Ovary (tissue), 10 donors: ENCODE measurements at regions of chr7 and their contacts with region 1.

Region 1: GRCh38 chr7:47088329-47089067 is 493.4 kb downstream of the TNS3 start:
- DNase-seq: peak; percentile 47 to 71 (median 65)
- H3K4me3 ChIP-seq: no peak overlapping the region
- H3K27ac ChIP-seq: no peak overlapping the region
- H3K4me1 ChIP-seq: peaks cover 2% of the 10 kb centered on the region
- H3K27me3 ChIP-seq: no peaks in the 10 kb centered on the region
- CTCF ChIP-seq: peak; percentile 71 to 91 (median 77)
- EP300 ChIP-seq: no peak
- POLR2A ChIP-seq: no peak

Region 2: DNA sequence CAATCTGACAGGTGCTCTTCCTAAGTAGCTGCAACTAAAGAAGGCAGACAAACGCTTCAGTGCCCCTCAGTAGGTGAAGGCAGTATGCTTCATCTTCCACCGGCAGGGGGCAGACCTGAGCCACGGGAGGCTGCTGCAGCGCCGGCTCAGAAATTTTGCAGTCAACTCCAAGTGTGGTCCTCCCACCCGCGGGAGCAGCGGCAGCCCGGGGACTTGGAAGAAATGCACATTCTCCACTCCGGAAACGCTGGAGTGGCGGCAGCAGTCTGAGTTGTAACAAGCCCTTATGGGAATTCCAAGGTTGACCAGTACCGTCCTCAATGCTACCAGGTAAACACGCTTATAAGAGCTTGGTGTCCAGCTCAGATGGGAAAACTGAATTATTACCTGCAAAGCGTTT is 1170.8 kb before region 1 on chr7:
- intact Hi-C with region 1: loop called (anchors 2 to 5 kb)
- DNase-seq: peak; percentile 77 to 88 (median 87)
- H3K4me3 ChIP-seq: peak overlapping the region; percentile 78
- H3K27ac ChIP-seq: no peak overlapping the region
- H3K4me1 ChIP-seq: peaks cover 4% of the 10 kb centered on the region
- H3K27me3 ChIP-seq: no peaks in the 10 kb centered on the region
- CTCF ChIP-seq: peak; percentile 80 to 87 (median 85)
- EP300 ChIP-seq: no peak
- POLR2A ChIP-seq: no peak

Region 3: GRCh38 chr7:45923290-45923689 is 1165.2 kb before region 1 on chr7:
- intact Hi-C with region 1: loop called (anchors 2 to 5 kb)
- DNase-seq: peak; percentile 66 to 83 (median 81)
- H3K4me3 ChIP-seq: no peak overlapping the region
- H3K27ac ChIP-seq: no peak overlapping the region
- H3K4me1 ChIP-seq: peaks cover 4% of the 10 kb centered on the region
- H3K27me3 ChIP-seq: no peaks in the 10 kb centered on the region
- CTCF ChIP-seq: peak; percentile 53 to 80 (median 76)
- EP300 ChIP-seq: no peak
- POLR2A ChIP-seq: no peak

Region 4: GRCh38 chr7:46352004-46352954 is 736.2 kb before region 1 on chr7:
- intact Hi-C with region 1: loop called in 1 of 4 experiments (anchors 10 kb)
- DNase-seq: peak in 2 of 5 donors; percentile 21 to 33
- H3K4me3 ChIP-seq: no peak overlapping the region
- H3K27ac ChIP-seq: no peak overlapping the region
- H3K4me1 ChIP-seq: peaks cover 1% of the 10 kb centered on the region
- H3K27me3 ChIP-seq: no peaks in the 10 kb centered on the region
- CTCF ChIP-seq: peak in 1 of 3 donors; percentile 33
- EP300 ChIP-seq: no peak
- POLR2A ChIP-seq: no peak

Region 5: DNA sequence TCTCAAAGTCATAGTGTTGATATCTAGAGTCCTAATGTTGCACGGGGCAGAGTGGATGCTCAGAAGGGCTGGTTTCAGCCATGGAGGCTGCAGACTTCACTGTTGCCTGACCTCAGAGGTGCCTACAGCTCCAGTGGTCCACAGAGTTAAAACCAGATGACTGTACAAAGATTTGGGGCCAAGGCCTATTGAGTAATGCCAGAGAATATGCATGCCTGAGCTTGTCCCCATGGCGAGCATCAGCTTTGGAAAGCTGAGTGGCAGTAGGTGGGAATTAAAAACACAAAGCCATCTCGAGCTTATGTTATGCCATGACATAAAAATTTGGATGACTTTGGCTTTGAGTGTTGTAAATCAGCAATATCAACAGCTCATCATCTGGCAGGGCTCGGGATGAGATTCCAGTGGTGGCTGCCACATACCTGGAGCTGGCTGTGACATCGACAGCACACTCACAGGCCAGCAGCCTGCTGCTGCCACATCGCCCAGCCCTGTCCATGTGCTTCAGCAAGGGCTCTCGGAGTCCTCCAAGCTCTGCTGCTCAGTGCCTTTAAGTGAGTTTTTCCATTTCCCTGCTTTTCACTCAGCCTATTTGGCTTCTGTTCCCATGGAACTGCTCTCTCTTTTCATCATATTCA is 113.8 kb after region 1 on chr7:
- intact Hi-C with region 1: no loop called
- DNase-seq: no peak
- H3K4me3 ChIP-seq: no peak overlapping the region
- H3K27ac ChIP-seq: no peak overlapping the region
- H3K4me1 ChIP-seq: no peaks in the 10 kb centered on the region
- H3K27me3 ChIP-seq: no peaks in the 10 kb centered on the region
- CTCF ChIP-seq: no peak
- EP300 ChIP-seq: no peak
- POLR2A ChIP-seq: no peak

Region 6: DNA sequence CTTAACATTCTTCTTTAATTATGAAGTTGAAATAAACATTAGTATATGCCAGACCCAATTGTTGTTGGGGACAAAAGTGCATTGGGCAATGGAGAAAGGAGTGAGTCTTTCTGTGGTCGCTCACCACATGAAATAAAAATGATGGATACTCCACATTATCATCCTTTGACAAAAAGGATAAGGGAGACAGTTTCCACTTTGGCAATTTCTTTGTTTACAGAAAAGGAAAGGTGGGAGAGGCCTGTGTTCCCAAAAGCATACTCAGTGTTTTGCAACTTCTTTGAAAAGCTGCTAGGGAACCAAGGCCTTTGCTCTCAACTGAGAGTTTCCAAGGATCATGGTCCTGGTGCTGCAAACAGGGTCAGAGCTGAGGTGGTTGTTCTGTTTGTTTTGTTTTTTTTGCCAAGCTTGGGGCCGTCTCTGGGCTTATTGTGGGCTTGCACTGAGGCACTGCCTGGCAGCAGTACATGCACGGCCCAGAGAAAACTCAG is 151.5 kb after region 1 on chr7:
- intact Hi-C with region 1: loop called in 1 of 4 experiments (anchors 10 kb)
- DNase-seq: peak in 3 of 5 donors; percentile 41 to 52 (median 48)
- H3K4me3 ChIP-seq: no peak overlapping the region
- H3K27ac ChIP-seq: peak overlapping the region in 1 of 2 donors; percentile 70
- H3K4me1 ChIP-seq: peaks cover 23% of the 10 kb centered on the region
- H3K27me3 ChIP-seq: no peaks in the 10 kb centered on the region
- CTCF ChIP-seq: no peak
- EP300 ChIP-seq: no peak
- POLR2A ChIP-seq: no peak

Region 7: DNA sequence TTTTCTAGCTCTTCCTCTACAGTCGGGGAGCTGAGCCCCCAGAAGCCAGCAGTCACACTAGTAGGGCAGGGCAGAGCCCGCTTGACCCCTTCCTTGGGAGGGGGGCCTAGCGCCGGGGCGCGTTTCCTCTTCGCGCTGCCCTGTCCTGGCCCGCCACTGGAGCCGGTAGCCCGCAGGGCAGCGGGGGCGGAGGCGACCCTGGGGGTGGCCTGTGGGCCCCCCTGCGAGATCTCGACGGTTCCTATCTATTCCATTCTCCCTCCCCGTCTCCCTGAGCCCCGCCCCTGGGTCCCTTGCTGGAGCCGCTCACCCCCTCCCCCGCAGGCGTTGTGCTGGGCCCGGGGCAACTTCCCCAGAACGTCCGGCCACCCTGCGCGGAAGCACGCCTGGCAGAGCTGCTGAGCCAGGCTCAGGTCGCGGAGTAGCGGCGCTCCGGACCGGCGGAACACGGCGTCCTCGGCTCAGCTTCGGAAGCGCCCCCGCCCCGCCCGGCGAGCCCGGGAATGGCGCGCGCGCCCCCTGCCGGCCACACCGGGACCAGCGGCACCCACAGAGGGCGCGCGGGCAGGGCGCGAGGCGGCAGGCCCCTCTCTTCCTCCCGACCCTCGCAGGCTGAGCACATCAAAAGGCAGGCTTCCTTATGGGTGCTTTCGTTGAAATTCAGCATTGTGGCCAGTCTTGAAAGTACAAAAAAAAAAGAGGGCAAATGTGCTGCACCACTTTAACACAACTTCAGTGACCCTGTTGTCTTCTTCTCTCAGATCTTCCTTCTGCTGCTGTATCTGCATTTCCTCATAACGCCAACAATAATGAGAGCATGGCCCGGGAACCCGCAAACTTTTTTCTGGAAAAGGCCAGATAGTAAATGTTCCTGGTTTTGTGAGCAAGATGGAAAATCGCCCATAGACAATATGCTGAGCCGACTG is 165.8 kb after region 1 on chr7:
- intact Hi-C with region 1: loop called in 2 of 4 experiments (anchors 10 kb)
- DNase-seq: peak; percentile 86 to 92 (median 86)
- H3K4me3 ChIP-seq: peak overlapping the region; percentile 48
- H3K27ac ChIP-seq: peak overlapping the region; percentile 80 to 91
- H3K4me1 ChIP-seq: peaks cover 6% of the 10 kb centered on the region
- H3K27me3 ChIP-seq: no peaks in the 10 kb centered on the region
- CTCF ChIP-seq: peak; percentile 85 to 97 (median 97)
- EP300 ChIP-seq: no peak
- POLR2A ChIP-seq: peak; percentile 19

Region 8: DNA sequence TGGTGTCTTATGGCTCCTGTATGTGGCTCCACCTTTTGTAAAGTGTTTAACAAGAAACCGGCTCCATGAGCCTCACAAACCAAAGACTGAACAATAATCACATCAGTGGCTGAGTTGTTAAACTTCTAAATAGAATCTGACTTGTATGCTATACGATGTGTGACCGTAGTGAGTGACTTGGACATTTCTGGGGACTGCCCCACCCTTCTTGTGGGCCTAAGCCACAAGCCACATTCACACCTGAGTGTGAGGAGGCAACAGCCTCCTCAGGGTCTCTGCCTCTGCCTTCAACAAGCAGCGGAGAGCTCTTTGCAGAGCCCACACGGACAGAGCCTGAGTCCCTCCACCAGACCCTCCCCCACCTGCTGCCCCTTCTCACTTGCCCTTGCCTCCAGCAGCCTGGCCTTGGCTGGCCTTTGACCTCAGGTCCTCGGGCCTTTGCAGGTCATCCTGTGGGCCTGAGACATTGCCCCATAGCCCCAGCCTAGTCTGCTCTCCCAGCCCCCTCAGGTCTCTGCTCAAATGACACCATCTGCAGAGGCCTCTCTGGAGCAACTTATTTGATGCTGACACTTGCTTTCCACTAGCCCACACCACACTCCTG is 650.2 kb after region 1 on chr7:
- intact Hi-C with region 1: loop called in 1 of 4 experiments (anchors 5 kb)
- DNase-seq: no peak
- H3K4me3 ChIP-seq: no peak overlapping the region
- H3K27ac ChIP-seq: no peak overlapping the region
- H3K4me1 ChIP-seq: no peaks in the 10 kb centered on the region
- H3K27me3 ChIP-seq: no peaks in the 10 kb centered on the region
- CTCF ChIP-seq: no peak
- EP300 ChIP-seq: no peak
- POLR2A ChIP-seq: no peak